ENCODE measurements at regions of chr18 and their contacts with region 1.

Region 1: GRCh38 chr18:31741097-31741735 is 19.5 kb downstream of the SLC25A52 start:
- DNase-seq: no peak
- ATAC-seq: no peak
- H3K4me3 ChIP-seq: no peak overlapping the region
- H3K27ac ChIP-seq: no peak overlapping the region
- H3K4me1 ChIP-seq: no peaks in the 10 kb centered on the region
- H3K27me3 ChIP-seq: no peaks in the 10 kb centered on the region

Region 2: GRCh38 chr18:31241900-31242409 is 499.3 kb before region 1 on chr18:
- intact Hi-C with region 1: no loop called
- DNase-seq: no peak
- ATAC-seq: no peak
- H3K4me3 ChIP-seq: no peak overlapping the region
- H3K27ac ChIP-seq: no peak overlapping the region
- H3K4me1 ChIP-seq: peaks cover 4% of the 10 kb centered on the region
- H3K27me3 ChIP-seq: no peaks in the 10 kb centered on the region

Region 3: GRCh38 chr18:31819106-31819924 is 78.1 kb after region 1 on chr18:
- intact Hi-C with region 1: loop called in 3 of 4 experiments (anchors 5 to 10 kb)
- DNase-seq: no peak
- ATAC-seq: peak; percentile 48 to 61
- H3K4me3 ChIP-seq: no peak overlapping the region
- H3K27ac ChIP-seq: no peak overlapping the region
- H3K4me1 ChIP-seq: no peaks in the 10 kb centered on the region
- H3K27me3 ChIP-seq: no peaks in the 10 kb centered on the region

Region 4: GRCh38 chr18:31977270-31977872 is 236.2 kb after region 1 on chr18:
- intact Hi-C with region 1: loop called in 2 of 4 experiments (anchors 10 kb)
- DNase-seq: no peak
- ATAC-seq: peak in 1 of 2 donors; percentile 60
- H3K4me3 ChIP-seq: no peak overlapping the region
- H3K27ac ChIP-seq: no peak overlapping the region
- H3K4me1 ChIP-seq: no peaks in the 10 kb centered on the region
- H3K27me3 ChIP-seq: no peaks in the 10 kb centered on the region

Measured in right cardiac atrium (tissue), 5 donors.